Naive thymus-derived CD4-positive, alpha-beta T cell (primary cell): ENCODE measurements at regions of chr3 and their contacts with region 1.

Region 1: GRCh38 chr3:31567036-31567435 is 34.3 kb downstream of the STT3B start:
- DNase-seq: peak in 7 of 9 donors; percentile 14 to 41 (median 21)
- ATAC-seq: peak; percentile 82
- H3K4me3 ChIP-seq: no peak overlapping the region
- H3K4me3 Mint-ChIP-seq: peak overlapping the region in 8 of 10 donors; percentile 3 to 59 (median 56)
- H3K27ac ChIP-seq: no peak overlapping the region
- H3K27ac Mint-ChIP-seq: peak overlapping the region in 4 of 9 donors; percentile 11 to 33 (median 20)
- H3K4me1 ChIP-seq: peaks cover 38 to 57% of the 10 kb centered on the region in 2 donors
- H3K4me1 Mint-ChIP-seq: peaks cover 63 to 95% (median 91%) of the 10 kb centered on the region in 7 donors
- H3K27me3 ChIP-seq: no peaks in the 10 kb centered on the region
- H3K27me3 Mint-ChIP-seq: no peaks in the 10 kb centered on the region

Region 2: DNA sequence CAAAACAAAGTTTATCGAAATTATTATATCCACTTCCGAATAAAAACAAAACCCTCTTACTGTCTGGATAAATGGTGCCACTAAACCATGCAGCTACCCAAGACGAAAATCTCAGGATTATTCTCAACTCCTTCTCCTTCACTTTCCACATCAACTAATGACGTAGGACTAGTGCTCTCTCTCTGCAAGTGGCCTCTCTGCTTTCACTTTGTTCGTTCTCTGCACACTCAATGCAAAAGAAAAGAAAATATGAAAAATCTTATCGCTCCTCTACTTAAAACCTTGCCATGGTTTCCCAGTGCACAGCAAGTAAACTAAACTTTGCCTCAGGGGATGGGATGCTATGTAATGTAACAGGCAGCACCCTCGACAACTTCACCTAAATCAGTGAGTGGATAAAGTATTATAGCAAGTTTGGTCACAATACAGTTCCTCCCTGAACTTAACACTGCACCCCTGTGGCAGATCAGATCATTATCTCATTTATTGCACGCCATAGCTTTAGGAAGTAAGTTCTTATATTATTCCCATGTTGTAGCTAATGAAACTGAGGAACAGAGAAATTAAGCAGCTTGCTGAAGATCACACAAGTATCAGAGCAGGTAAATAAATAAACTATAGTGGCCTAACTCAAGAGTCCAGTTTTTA is 409.9 kb before region 1 on chr3:
- CTCF ChIA-PET with region 1: no interaction called
- POLR2A ChIA-PET with region 1: no interaction called
- intact Hi-C with region 1: no loop called
- DNase-seq: peak in 4 of 9 donors; percentile 0 to 19 (median 2)
- ATAC-seq: peak; percentile 37
- H3K4me3 ChIP-seq: peak overlapping the region; percentile 19
- H3K4me3 Mint-ChIP-seq: peak overlapping the region in 9 of 10 donors; percentile 27 to 78 (median 71)
- H3K27ac ChIP-seq: no peak overlapping the region
- H3K27ac Mint-ChIP-seq: peak overlapping the region in 8 of 9 donors; percentile 3 to 69 (median 50)
- H3K4me1 ChIP-seq: no peaks in the 10 kb centered on the region
- H3K4me1 Mint-ChIP-seq: peaks cover 9 to 13% (median 10%) of the 10 kb centered on the region in 7 donors
- H3K27me3 ChIP-seq: no peaks in the 10 kb centered on the region
- H3K27me3 Mint-ChIP-seq: no peaks in the 10 kb centered on the region

Region 3: GRCh38 chr3:31581660-31582059 is 14.6 kb after region 1 on chr3:
- CTCF ChIA-PET with region 1: interaction called, 3 read pairs
- POLR2A ChIA-PET with region 1: no interaction called
- intact Hi-C with region 1: loop called in 1 of 2 experiments (anchors 2 kb)
- DNase-seq: no peak
- ATAC-seq: no peak
- H3K4me3 ChIP-seq: no peak overlapping the region
- H3K4me3 Mint-ChIP-seq: peak overlapping the region in 6 of 10 donors; percentile 7 to 57 (median 38)
- H3K27ac ChIP-seq: no peak overlapping the region
- H3K27ac Mint-ChIP-seq: peak overlapping the region in 5 of 9 donors; percentile 27 to 82 (median 60)
- H3K4me1 ChIP-seq: peaks cover 9 to 17% of the 10 kb centered on the region in 2 donors
- H3K4me1 Mint-ChIP-seq: peaks cover 39 to 63% (median 42%) of the 10 kb centered on the region in 7 donors
- H3K27me3 ChIP-seq: no peaks in the 10 kb centered on the region
- H3K27me3 Mint-ChIP-seq: no peaks in the 10 kb centered on the region